ENCODE measurements at regions of chr10 and their contacts with region 1.

Region 1: GRCh38 chr10:62050893-62051433 is 149.5 kb downstream of the ARID5B start:
- DNase-seq: peak; percentile 91
- H3K4me3 Mint-ChIP-seq: peak overlapping the region; percentile 94
- H3K27ac Mint-ChIP-seq: peak overlapping the region; percentile 96
- H3K4me1 Mint-ChIP-seq: peaks cover 71% of the 10 kb centered on the region
- H3K27me3 Mint-ChIP-seq: no peaks in the 10 kb centered on the region

Region 2: DNA sequence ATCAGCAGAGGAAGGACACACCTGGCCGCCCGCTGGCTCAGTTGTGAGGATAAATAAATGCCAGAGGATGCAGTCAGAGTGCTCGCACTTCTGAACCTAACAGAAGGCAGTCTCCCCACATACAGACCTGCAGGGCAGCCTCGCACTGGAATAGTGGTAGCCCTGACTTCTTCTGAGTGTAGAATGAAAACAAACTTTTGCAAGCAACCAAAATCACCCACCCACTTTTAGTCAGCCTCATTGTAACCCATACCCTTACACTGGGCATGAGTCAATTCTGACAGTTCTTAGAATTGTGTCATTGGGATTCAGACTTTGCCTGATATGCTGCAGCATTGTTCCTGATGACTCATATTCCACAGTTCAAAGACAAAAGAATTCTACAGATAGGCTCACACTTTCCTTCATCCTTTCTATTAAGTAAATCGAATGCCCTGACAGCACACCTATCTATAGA is 1439.6 kb before region 1 on chr10:
- CTCF ChIA-PET with region 1: no interaction called
- POLR2A ChIA-PET with region 1: no interaction called
- intact Hi-C with region 1: no loop called
- DNase-seq: peak; percentile 51
- H3K4me3 Mint-ChIP-seq: no peak overlapping the region
- H3K27ac Mint-ChIP-seq: peak overlapping the region; percentile 24
- H3K4me1 Mint-ChIP-seq: peaks cover 27% of the 10 kb centered on the region
- H3K27me3 Mint-ChIP-seq: no peaks in the 10 kb centered on the region

Region 3: GRCh38 chr10:61903221-61903927 is 147.6 kb before region 1 on chr10:
- CTCF ChIA-PET with region 1: interaction called, 14 read pairs
- POLR2A ChIA-PET with region 1: interaction called, 268 read pairs
- intact Hi-C with region 1: loop called (anchors 1 kb)
- DNase-seq: peak; percentile 84
- H3K4me3 Mint-ChIP-seq: peak overlapping the region; percentile 90
- H3K27ac Mint-ChIP-seq: peak overlapping the region; percentile 95
- H3K4me1 Mint-ChIP-seq: peaks cover 45% of the 10 kb centered on the region
- H3K27me3 Mint-ChIP-seq: no peaks in the 10 kb centered on the region

Region 4: GRCh38 chr10:61961278-61961677 is 89.7 kb before region 1 on chr10:
- CTCF ChIA-PET with region 1: no interaction called
- POLR2A ChIA-PET with region 1: interaction called, 29 read pairs
- intact Hi-C with region 1: loop called (anchors 1 kb)
- DNase-seq: peak; percentile 49
- H3K4me3 Mint-ChIP-seq: peak overlapping the region; percentile 24
- H3K27ac Mint-ChIP-seq: peak overlapping the region; percentile 76
- H3K4me1 Mint-ChIP-seq: peaks cover 87% of the 10 kb centered on the region
- H3K27me3 Mint-ChIP-seq: no peaks in the 10 kb centered on the region

Region 5: GRCh38 chr10:62019013-62019684 is 31.8 kb before region 1 on chr10:
- CTCF ChIA-PET with region 1: interaction called, 6 read pairs
- POLR2A ChIA-PET with region 1: interaction called, 163 read pairs
- intact Hi-C with region 1: loop called (anchors 1 kb)
- DNase-seq: no peak
- H3K4me3 Mint-ChIP-seq: no peak overlapping the region
- H3K27ac Mint-ChIP-seq: peak overlapping the region; percentile 96
- H3K4me1 Mint-ChIP-seq: peaks cover 85% of the 10 kb centered on the region
- H3K27me3 Mint-ChIP-seq: no peaks in the 10 kb centered on the region

Region 6: DNA sequence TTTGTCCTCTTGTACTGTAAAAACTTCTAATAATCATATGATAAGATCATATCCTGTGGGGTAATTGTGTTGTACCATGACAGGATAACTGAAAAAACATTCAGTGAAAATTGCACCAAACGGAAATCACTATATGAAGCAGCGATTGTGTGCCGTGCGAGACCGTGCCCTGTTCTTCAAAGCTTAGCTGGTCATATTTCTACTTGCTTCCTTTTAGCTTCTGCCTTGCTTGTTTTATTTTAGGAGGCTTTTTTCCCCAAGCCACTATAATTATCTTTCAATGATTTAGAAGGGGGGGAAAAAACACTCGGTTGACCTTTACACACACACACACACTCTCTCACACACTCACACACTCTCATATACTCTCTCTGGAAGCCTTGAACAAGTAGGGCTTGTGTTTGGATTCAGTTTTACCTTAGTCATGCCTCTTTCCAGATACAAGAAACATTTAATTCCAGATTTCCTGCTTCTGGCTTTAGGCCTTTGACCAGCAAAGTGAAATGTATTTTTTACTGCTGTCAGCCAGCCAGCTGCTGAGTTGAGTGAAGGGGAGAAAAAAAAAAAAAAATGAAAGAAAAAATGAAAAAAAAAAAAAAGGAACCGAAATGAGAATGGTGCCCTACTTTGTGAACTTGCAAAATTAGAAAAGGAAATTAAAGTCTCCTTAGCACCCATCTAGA is 31.9 kb after region 1 on chr10:
- CTCF ChIA-PET with region 1: no interaction called
- POLR2A ChIA-PET with region 1: interaction called, 9 read pairs
- intact Hi-C with region 1: loop called (anchors 1 kb)
- DNase-seq: peak; percentile 75
- H3K4me3 Mint-ChIP-seq: peak overlapping the region; percentile 18
- H3K27ac Mint-ChIP-seq: peak overlapping the region; percentile 85
- H3K4me1 Mint-ChIP-seq: peaks cover 77% of the 10 kb centered on the region
- H3K27me3 Mint-ChIP-seq: no peaks in the 10 kb centered on the region

Region 7: GRCh38 chr10:62422068-62422590 is 371.2 kb after region 1 on chr10:
- CTCF ChIA-PET with region 1: no interaction called
- POLR2A ChIA-PET with region 1: no interaction called
- intact Hi-C with region 1: loop called (anchors 10 kb)
- DNase-seq: no peak
- H3K4me3 Mint-ChIP-seq: no peak overlapping the region
- H3K27ac Mint-ChIP-seq: no peak overlapping the region
- H3K4me1 Mint-ChIP-seq: peaks cover 29% of the 10 kb centered on the region
- H3K27me3 Mint-ChIP-seq: peaks cover 2% of the 10 kb centered on the region

Region 8: GRCh38 chr10:63268798-63269503 is 1218.0 kb after region 1 on chr10:
- CTCF ChIA-PET with region 1: no interaction called
- POLR2A ChIA-PET with region 1: interaction called, 22 read pairs
- intact Hi-C with region 1: loop called (anchors 1 kb)
- DNase-seq: peak; percentile 89
- H3K4me3 Mint-ChIP-seq: peak overlapping the region; percentile 97
- H3K27ac Mint-ChIP-seq: peak overlapping the region; percentile 97
- H3K4me1 Mint-ChIP-seq: peaks cover 24% of the 10 kb centered on the region
- H3K27me3 Mint-ChIP-seq: no peaks in the 10 kb centered on the region

Measured in activated CD4-positive, alpha-beta memory T cell treated with anti-CD3 and anti-CD28 coated beads for 36 hours (primary cell).